ENCODE measurements at regions of chr9 and their contacts with region 1.

Region 1: DNA sequence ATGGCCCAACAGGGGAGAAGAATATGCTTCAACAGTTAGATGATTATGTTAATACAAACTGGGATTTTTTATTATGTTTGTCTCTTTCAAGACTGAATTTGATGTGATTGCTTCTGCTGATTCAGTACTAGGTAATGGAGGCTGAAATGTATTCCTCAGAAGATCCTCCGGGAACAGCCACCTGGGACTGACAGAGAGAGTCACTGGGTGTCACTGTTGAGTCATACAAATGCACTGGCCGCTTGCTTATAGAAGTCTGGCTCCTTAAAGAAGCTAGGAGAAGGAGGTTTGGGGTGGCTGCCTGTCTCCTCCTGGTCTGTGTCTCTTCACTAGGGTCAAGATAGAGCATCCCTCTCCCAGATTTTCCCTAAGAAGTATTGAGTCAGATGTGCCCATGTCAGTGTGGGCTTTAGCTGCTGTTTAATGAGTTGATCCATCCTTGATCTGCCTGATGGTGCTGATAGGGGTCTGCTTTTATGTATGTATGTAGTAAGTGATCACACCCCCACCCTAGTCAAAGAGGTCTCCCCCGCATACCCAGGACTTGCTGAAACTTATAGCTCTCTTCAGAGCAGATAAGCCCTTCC is 773.4 kb downstream of the BRINP1 start:
- DNase-seq: peak; percentile 28
- H3K4me3 ChIP-seq: no peak overlapping the region; a peak in 1 of 4 replicates
- H3K27ac ChIP-seq: no peak overlapping the region
- H3K4me1 ChIP-seq: no peaks in the 10 kb centered on the region
- H3K27me3 ChIP-seq: no peaks in the 10 kb centered on the region
- CTCF ChIP-seq: peak; percentile 28
- EP300 ChIP-seq: no peak
- RAD21 ChIP-seq: peak; percentile 87

Region 2: GRCh38 chr9:118606669-118607068 is 10.9 kb after region 1 on chr9:
- CTCF ChIA-PET with region 1: interaction called, 10 read pairs
- POLR2A ChIA-PET with region 1: no interaction called
- DNase-seq: no peak
- H3K4me3 ChIP-seq: no peak overlapping the region
- H3K27ac ChIP-seq: no peak overlapping the region
- H3K4me1 ChIP-seq: no peaks in the 10 kb centered on the region
- H3K27me3 ChIP-seq: no peaks in the 10 kb centered on the region
- CTCF ChIP-seq: no peak
- EP300 ChIP-seq: no peak
- RAD21 ChIP-seq: no peak

Measured in SK-N-SH (cell line).